Activated T-helper 1 cell treated with anti-CD3 and anti-CD28 coated beads, Interleukin-12 subunit alpha, Interleukin-12 subunit beta, Interleukin-2, Interleukin-4 antibody, amounts not matched to agents 30 ng/mL and 10 ng/mL and 1 ng/mL, durations not matched to agents 14 hours and 24 hours and 36 hours (primary cell): ENCODE measurements at regions of chr16 and their contacts with region 1.

Region 1: GRCh38 chr16:67055712-67056487 is 27.0 kb downstream of the CBFB start:
- DNase-seq: no peak
- H3K4me3 Mint-ChIP-seq: peak overlapping the region; percentile 74
- H3K27ac Mint-ChIP-seq: peak overlapping the region; percentile 96
- H3K4me1 Mint-ChIP-seq: peaks cover 51% of the 10 kb centered on the region
- H3K27me3 Mint-ChIP-seq: no peaks in the 10 kb centered on the region

Region 2: GRCh38 chr16:66717112-66717675 is 338.7 kb before region 1 on chr16:
- intact Hi-C with region 1: no loop called
- DNase-seq: no peak
- H3K4me3 Mint-ChIP-seq: no peak overlapping the region
- H3K27ac Mint-ChIP-seq: no peak overlapping the region
- H3K4me1 Mint-ChIP-seq: no peaks in the 10 kb centered on the region
- H3K27me3 Mint-ChIP-seq: no peaks in the 10 kb centered on the region

Region 3: GRCh38 chr16:66947302-66948065 is 108.4 kb before region 1 on chr16:
- intact Hi-C with region 1: no loop called
- DNase-seq: peak; percentile 78
- H3K4me3 Mint-ChIP-seq: peak overlapping the region; percentile 87
- H3K27ac Mint-ChIP-seq: no peak overlapping the region
- H3K4me1 Mint-ChIP-seq: peaks cover 24% of the 10 kb centered on the region
- H3K27me3 Mint-ChIP-seq: peaks cover 19% of the 10 kb centered on the region

Region 4: GRCh38 chr16:67039260-67040020 is 16.5 kb before region 1 on chr16:
- intact Hi-C with region 1: loop called (anchors 1 kb)
- DNase-seq: no peak
- H3K4me3 Mint-ChIP-seq: no peak overlapping the region
- H3K27ac Mint-ChIP-seq: peak overlapping the region; percentile 43
- H3K4me1 Mint-ChIP-seq: peaks cover 60% of the 10 kb centered on the region
- H3K27me3 Mint-ChIP-seq: no peaks in the 10 kb centered on the region

Region 5: DNA sequence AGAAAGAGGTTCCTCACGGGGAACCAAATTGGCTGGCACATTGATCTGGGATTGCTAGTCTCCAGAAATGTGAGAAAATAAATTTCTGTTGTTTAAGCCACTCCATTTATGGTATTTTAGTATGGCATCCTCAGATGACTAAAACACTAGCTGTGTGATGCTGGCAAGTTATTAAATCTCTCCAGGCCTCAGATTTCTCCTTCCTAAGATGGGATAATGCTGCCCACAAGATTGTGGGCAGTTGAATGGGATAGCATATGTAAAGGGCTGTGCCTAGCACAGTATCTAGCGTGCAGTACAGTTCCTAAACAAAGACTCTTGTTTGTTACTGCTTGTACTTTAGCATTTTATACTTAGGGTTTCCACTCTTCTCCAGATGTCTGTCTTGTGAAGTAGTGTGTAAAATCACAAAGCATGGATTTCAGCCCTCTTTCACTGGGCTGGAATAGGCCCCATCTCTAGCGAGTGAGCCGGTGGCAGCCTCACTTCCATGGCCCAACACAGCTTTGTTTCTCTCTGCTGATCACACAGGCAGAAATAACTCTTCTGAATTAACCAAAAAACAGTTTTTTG is 15.7 kb after region 1 on chr16:
- intact Hi-C with region 1: no loop called
- DNase-seq: no peak
- H3K4me3 Mint-ChIP-seq: no peak overlapping the region
- H3K27ac Mint-ChIP-seq: no peak overlapping the region
- H3K4me1 Mint-ChIP-seq: peaks cover 15% of the 10 kb centered on the region
- H3K27me3 Mint-ChIP-seq: no peaks in the 10 kb centered on the region

Region 6: DNA sequence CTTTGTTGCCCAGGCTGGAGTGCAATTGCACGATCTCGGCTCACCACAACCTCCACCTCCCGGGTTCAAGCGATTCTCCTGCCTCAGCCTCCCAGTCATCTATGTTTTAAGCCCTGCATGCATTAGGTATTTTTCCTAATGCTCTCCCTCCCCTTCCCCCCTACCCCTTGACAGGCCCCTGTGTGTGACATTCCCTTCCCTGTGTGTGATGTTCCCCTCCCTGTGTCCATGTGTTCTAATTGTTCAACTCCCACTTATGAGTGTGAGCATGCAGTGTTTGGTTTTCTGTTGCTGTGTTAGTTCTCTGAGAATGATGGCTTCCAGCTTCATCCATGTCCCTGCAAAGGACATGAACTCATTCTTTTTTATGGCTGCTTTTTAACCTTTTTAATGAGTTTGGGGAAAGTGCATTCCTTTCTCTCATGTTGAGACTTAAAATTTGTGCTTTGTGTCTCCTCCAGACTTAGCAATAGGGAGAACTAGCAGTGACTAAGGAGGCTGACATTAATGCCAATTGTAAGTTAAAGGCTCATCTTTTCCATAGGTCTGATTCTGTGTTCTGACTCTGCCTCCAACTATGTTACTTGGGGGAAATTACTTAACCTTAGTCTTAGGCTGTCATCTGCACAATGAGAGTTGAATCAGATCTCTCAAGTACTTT is 36.1 kb after region 1 on chr16:
- intact Hi-C with region 1: loop called (anchors 2 kb)
- DNase-seq: no peak
- H3K4me3 Mint-ChIP-seq: no peak overlapping the region
- H3K27ac Mint-ChIP-seq: peak overlapping the region; percentile 92
- H3K4me1 Mint-ChIP-seq: peaks cover 17% of the 10 kb centered on the region
- H3K27me3 Mint-ChIP-seq: no peaks in the 10 kb centered on the region

Region 7: DNA sequence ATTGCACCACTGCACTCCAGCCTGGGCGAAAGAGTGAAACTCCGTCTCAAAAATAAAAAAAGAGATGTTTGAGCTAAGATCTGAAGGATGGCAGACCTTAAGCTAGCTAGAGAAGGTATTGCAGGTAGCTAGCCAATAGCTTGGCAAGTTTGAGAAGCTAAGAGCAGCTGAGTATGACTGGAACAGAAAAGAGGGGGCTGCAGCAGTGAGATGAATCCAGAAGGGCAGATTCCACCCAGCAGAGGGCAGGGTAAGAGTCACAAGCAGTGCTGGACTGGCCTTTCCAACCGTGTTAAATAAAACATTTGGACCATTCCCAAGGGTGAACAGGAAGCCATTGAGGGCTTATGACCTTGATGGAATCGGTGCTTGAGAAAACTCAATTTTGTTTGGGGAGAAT is 48.2 kb after region 1 on chr16:
- intact Hi-C with region 1: loop called (anchors 2 kb)
- DNase-seq: no peak
- H3K4me3 Mint-ChIP-seq: no peak overlapping the region
- H3K27ac Mint-ChIP-seq: no peak overlapping the region
- H3K4me1 Mint-ChIP-seq: peaks cover 31% of the 10 kb centered on the region
- H3K27me3 Mint-ChIP-seq: no peaks in the 10 kb centered on the region

Region 8: DNA sequence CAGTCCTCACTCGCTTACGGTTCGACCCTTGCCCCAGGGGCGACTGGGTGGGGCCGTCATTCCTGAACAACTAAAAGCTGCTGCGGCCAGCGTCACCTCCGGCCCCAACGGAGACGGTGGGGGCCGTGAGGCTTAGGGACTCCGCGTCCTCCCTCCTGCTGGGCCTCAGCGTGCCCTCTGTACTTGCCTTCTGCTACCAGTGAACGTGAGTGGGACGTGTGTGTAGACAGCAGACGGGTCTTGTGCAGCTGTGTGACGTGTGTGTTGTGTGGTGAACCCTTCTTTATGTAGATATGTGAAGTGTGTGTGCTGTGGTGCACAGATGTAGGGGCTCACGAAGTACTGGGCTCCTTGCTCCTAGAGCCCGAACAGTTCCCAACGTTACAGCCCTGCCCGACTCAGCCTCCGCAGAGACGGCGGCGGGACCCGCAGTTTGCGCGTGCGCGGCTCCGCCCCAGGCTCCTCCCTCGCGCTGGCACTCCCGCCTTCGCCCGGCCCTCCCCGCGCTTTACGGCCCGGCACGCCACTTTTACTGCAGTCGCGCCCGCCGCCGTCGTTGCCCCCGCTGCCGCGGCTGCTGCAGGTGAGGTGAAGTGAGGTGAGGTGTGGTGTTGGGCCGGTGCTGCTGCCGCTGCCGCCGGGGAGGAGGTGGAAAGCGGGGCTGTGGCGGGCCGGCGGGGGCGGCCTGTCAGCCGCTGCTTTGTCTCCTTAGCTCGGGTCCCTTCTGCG is 53.7 kb after region 1 on chr16 and contains the start of gene PHAF1:
- intact Hi-C with region 1: loop called (anchors 2 kb)
- DNase-seq: peak; percentile 93
- H3K4me3 Mint-ChIP-seq: peak within 1 kb of the TSS; percentile 96
- H3K27ac Mint-ChIP-seq: peak within 1 kb of the TSS; percentile 87
- H3K4me1 Mint-ChIP-seq: peaks cover 45% of the 10 kb centered on the region
- H3K27me3 Mint-ChIP-seq: no peaks in the 10 kb centered on the region
- total RNA-seq, gene PHAF1: 20.5 and 20.6 TPM in 2 replicates